ENCODE measurements at regions of chr9 and their contacts with region 1.

Region 1: GRCh38 chr9:121750715-121751623 is 99.5 kb downstream of the DAB2IP start:
- DNase-seq: peak in 1 of 3 donors; percentile 58
- ATAC-seq: peak in 1 of 2 donors; percentile 16
- H3K4me3 ChIP-seq: no peak overlapping the region
- H3K27ac ChIP-seq: no peak overlapping the region
- H3K4me1 ChIP-seq: peaks cover 55% of the 10 kb centered on the region
- H3K27me3 ChIP-seq: no peaks in the 10 kb centered on the region

Region 2: DNA sequence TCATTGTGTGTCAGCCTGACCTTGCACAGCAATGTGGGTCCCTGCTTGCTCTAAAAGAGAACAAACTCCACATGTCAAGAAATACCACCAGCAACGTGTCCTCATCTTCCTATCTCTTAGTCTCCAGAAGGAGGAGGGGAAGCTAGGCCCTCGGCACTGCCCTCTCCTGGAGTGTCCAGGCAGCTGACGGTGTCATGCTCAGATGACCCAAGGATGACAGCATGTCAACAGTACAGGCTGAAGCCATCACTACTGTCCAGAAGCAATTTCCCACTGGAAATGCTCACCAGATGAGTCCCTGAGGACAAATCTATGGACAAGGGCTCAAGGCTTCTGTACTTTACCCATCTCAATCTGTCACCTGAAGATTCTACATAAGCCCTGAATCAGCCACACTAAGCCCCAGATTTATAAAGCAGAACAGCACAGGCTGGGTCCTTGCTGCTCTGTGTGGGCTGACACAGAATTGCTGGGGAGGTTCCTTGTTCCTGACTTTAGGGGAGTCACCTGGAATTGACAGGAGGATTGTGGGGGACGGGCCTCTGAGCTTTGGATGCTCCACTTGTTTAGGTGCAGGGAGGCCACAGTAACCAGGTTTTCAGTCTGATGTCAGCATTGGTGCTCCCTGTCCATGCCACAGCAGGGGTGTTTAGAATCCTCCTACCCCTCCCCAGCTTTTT is 110.7 kb after region 1 on chr9:
- intact Hi-C with region 1: loop called in 2 of 4 experiments (anchors 10 kb)
- DNase-seq: peak; percentile 24 to 70 (median 69)
- ATAC-seq: peak; percentile 65 to 79
- H3K4me3 ChIP-seq: no peak overlapping the region
- H3K27ac ChIP-seq: no peak overlapping the region
- H3K4me1 ChIP-seq: peaks cover 1% of the 10 kb centered on the region
- H3K27me3 ChIP-seq: no peaks in the 10 kb centered on the region